ENCODE measurements at regions of chr17 and their contacts with region 1.

Region 1: DNA sequence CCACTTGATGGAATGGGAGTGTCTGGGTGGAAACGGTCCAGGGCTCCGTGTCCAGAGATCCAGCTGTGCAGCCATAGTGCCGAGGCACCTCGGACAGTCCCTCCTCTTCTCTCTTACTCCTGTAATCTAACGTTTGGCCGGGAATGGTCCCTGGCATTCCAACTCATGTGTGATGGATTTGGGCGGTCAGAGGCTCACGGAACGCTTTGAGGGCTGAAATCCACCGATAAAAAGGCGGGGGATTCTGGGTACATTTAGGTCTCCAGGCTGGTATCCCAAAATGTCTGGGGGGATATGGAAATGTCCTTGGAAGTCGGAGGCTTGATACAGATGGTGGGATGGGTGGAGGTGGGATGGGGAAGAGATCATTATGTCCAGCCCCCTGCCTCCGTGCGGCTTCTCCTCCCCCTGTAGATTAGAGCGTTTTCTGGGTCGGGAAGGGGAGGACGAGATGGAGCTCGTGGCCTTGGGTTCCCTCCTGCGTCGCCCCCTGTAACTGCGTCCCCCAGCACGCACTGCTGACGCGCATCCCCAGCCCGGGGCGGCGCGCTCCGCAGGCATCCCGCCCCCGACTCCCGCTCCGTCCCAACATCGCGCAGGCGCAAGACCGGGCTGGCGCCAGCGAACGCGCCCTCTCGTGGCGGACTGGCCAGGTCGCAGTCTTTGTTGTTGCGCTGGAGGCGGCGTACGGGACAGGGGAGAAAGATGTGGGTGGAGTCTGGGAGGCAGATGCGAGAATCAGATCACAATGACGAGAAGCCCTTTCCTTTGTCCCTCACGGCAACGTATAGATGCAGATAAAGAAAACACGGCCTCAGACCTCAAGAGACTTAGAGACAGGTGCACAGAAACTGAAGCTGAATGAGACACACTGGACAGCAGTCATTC is 4.5 kb upstream of the SGCA start:
- DNase-seq: peak; percentile 92 to 96 (median 94)
- ATAC-seq: peak; percentile 79 to 87 (median 86)
- H3K4me3 ChIP-seq: peak overlapping the region; percentile 27 to 70 (median 62)
- H3K27ac ChIP-seq: peak overlapping the region; percentile 10 to 83 (median 72)
- H3K4me1 ChIP-seq: peaks cover 0 to 42% (median 22%) of the 10 kb centered on the region in 12 donors
- H3K27me3 ChIP-seq: no peaks in the 10 kb centered on the region
- CTCF ChIP-seq: peak; percentile 83 to 99 (median 95)
- POLR2A ChIP-seq: peak in 1 of 2 donors; percentile 59

Region 2: GRCh38 chr17:50139950-50140871 is 21.1 kb before region 1 on chr17:
- intact Hi-C with region 1: loop called in 3 of 10 experiments (anchors 1 to 2 kb)
- DNase-seq: peak; percentile 82 to 89 (median 84)
- ATAC-seq: peak; percentile 57 to 85 (median 74)
- H3K4me3 ChIP-seq: peak overlapping the region in 3 of 12 donors; percentile 6 to 14 (median 9)
- H3K27ac ChIP-seq: peak overlapping the region; percentile 29 to 80 (median 56)
- H3K4me1 ChIP-seq: peaks cover 0 to 48% (median 32%) of the 10 kb centered on the region in 12 donors
- H3K27me3 ChIP-seq: no peaks in the 10 kb centered on the region
- CTCF ChIP-seq: peak; percentile 89 to 99 (median 95)
- POLR2A ChIP-seq: no peak